ENCODE measurements at regions of chr3 and their contacts with region 1.

Region 1: GRCh38 chr3:128889139-128889894 is 9.9 kb downstream of the ACAD9 start:
- DNase-seq: no peak
- H3K4me3 ChIP-seq: no peak overlapping the region
- H3K27ac ChIP-seq: no peak overlapping the region
- H3K27me3 ChIP-seq: no peaks in the 10 kb centered on the region
- CTCF ChIP-seq: no peak

Region 2: DNA sequence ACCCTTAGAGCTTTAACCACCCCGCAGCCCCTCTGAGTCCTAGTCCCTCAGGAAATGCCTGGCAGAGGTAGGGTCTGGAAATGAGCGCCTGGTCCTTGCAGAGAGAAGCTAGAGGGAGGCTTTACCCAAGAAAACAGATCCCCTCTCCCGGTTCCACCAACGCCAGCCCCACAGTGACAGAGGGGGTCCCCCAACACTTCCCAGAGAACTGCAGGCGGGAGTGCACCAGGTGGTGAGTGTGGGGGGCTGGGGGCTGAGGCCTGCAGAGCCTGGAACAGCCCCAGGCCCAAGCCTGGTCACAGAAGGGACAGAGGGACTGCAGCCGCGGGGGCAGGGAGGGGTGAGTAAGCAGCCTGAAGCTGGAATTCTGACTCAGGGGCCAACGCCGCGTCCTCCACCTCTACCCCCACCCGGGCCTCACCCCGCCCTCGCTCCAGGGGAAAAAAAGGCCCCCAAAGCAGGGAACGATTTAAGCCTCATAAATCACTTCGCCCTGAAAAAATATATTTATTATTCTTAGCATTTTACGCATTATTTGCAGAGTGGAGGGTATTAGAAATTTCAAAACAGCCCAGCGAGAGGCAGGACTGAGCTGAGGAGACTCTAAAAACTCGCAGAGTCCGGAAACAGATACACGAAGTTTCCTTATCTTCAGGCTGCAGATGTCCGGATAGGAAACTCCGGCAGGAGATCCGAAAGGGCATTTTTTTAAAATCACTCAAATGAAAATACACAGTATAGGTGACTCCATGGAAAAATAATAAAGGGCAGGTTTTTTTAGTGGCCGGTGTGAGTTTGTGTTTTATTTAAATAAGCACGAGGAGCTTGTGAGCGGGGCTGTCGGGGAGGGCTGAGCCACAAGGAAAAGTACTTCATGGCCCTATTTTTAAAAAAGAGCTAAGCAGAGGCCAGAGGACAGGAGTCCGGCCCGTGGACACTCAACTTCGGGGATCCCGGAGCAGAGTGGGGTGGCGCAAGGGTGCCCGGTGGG is 406.4 kb before region 1 on chr3:
- CTCF ChIA-PET with region 1: interaction called, 17 read pairs
- POLR2A ChIA-PET with region 1: no interaction called
- DNase-seq: peak; percentile 67
- H3K4me3 ChIP-seq: peak overlapping the region; percentile 54
- H3K27ac ChIP-seq: peak overlapping the region; percentile 91
- H3K27me3 ChIP-seq: no peaks in the 10 kb centered on the region
- CTCF ChIP-seq: peak; percentile 31; the same call in 1 of the 2 replicates

Region 3: DNA sequence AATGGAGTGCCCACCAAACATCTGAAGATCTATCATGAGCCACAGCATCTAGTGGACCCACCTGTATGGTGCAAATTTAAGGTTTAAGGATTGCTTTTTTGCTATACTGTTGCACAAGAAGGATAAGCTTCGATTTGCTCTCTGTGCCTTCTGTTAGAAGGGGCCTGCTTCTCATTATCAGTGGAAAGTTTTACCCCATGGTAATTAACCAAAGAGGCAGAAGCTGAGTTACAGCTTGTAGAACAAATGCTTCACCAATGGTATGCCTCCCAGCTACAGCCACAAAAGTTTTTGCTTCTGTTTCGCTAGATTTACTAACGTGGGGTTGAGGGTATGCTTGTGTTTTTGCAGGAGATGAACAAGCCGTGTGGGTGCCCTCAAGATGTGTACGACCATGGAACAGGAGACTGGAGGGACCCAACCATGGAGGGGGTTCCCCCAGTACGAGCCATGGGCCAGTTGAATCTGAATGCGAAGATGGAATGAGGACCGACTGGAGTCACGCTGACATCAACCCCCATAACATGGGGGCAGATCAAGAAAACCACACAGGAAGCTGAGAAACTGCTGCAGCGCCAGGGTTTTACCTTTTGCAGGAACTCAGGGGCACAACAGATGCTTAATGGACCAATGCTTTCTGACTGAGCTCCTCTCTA is 33.6 kb after region 1 on chr3:
- CTCF ChIA-PET with region 1: no interaction called
- POLR2A ChIA-PET with region 1: no interaction called
- DNase-seq: no peak
- H3K4me3 ChIP-seq: no peak overlapping the region
- H3K27ac ChIP-seq: no peak overlapping the region
- H3K27me3 ChIP-seq: peaks cover 2% of the 10 kb centered on the region
- CTCF ChIP-seq: no peak

Region 4: DNA sequence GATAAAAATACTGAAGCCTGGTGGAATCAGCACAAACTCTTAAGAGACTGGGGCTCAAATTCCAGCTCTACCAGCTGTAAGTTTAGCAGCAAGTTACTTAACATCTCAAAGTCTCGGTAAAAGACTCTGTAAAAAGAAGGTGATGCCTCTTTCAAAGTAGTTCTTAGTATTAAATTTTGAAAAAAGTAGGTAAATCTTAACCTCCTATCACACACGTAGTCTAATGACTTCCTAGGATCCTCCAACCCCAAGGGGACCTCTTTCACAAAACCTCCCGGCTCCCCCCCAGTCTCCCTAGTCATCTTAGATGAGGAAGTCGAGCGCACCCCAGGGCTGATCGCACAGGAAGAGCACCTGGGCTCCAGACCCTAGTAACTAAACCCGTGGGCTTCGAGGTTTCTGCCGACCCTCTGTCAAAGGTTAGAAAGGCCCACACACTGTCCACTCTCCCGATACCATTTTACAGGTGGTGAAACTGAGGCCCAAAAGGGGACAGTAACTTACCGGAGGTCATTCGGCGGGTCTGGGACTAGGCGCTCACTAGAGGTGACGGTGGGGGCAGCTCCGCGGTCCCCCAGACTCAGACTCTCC is 550.0 kb after region 1 on chr3:
- CTCF ChIA-PET with region 1: no interaction called
- POLR2A ChIA-PET with region 1: no interaction called
- DNase-seq: no peak
- H3K4me3 ChIP-seq: peak overlapping the region; percentile 97
- H3K27ac ChIP-seq: peak overlapping the region; percentile 71
- H3K27me3 ChIP-seq: no peaks in the 10 kb centered on the region
- CTCF ChIP-seq: no peak